HepG2 (cell line): ENCODE measurements at regions of chr4 and their contacts with region 1.

Region 1: GRCh38 chr4:42809419-42810084 is 83.0 kb upstream of the GRXCR1 start:
- DNase-seq: no peak
- ATAC-seq: no peak
- H3K4me3 ChIP-seq: no peak overlapping the region
- H3K27ac ChIP-seq: no peak overlapping the region
- H3K4me1 ChIP-seq: no peaks in the 10 kb centered on the region
- H3K27me3 ChIP-seq: no peaks in the 10 kb centered on the region
- CTCF ChIP-seq: no peak
- EP300 ChIP-seq: no peak
- POLR2A ChIP-seq: no peak
- RAD21 ChIP-seq: no peak

Region 2: GRCh38 chr4:42302348-42302747 is 507.2 kb before region 1 on chr4:
- CTCF ChIA-PET with region 1: no interaction called
- POLR2A ChIA-PET with region 1: no interaction called
- in situ Hi-C with region 1: no loop called
- intact Hi-C with region 1: no loop called
- DNase-seq: peak; percentile 68
- ATAC-seq: peak; percentile 96
- H3K4me3 ChIP-seq: no peak overlapping the region
- H3K27ac ChIP-seq: no peak overlapping the region
- H3K4me1 ChIP-seq: no peaks in the 10 kb centered on the region
- H3K27me3 ChIP-seq: peaks cover 0 to 2% of the 10 kb centered on the region in 2 experiments; a peak in 1 of 5 replicates
- CTCF ChIP-seq: peak; percentile 67
- EP300 ChIP-seq: no peak
- POLR2A ChIP-seq: no peak
- RAD21 ChIP-seq: no peak

Region 3: GRCh38 chr4:42843694-42844093 is 34.1 kb after region 1 on chr4:
- CTCF ChIA-PET with region 1: no interaction called
- POLR2A ChIA-PET with region 1: no interaction called
- in situ Hi-C with region 1: no loop called
- intact Hi-C with region 1: loop called (anchors 1 kb)
- DNase-seq: no peak
- ATAC-seq: no peak
- H3K4me3 ChIP-seq: no peak overlapping the region
- H3K27ac ChIP-seq: no peak overlapping the region
- H3K4me1 ChIP-seq: no peaks in the 10 kb centered on the region
- H3K27me3 ChIP-seq: no peaks in the 10 kb centered on the region
- CTCF ChIP-seq: no peak
- EP300 ChIP-seq: no peak
- POLR2A ChIP-seq: no peak
- RAD21 ChIP-seq: no peak

Region 4: GRCh38 chr4:42985976-42986375 is 176.4 kb after region 1 on chr4:
- CTCF ChIA-PET with region 1: no interaction called
- POLR2A ChIA-PET with region 1: no interaction called
- in situ Hi-C with region 1: no loop called
- intact Hi-C with region 1: no loop called
- DNase-seq: no peak
- ATAC-seq: no peak
- H3K4me3 ChIP-seq: no peak overlapping the region
- H3K27ac ChIP-seq: no peak overlapping the region
- H3K4me1 ChIP-seq: no peaks in the 10 kb centered on the region
- H3K27me3 ChIP-seq: no peaks in the 10 kb centered on the region
- CTCF ChIP-seq: no peak
- EP300 ChIP-seq: no peak
- POLR2A ChIP-seq: no peak
- RAD21 ChIP-seq: no peak